Activated CD4-positive, alpha-beta memory T cell treated with anti-CD3 and anti-CD28 coated beads for 36 hours (primary cell): ENCODE measurements at regions of chr13 and their contacts with region 1.

Region 1: GRCh38 chr13:104510422-104510821 is 1444.2 kb upstream of the SLC10A2 start:
- DNase-seq: no peak
- H3K4me3 Mint-ChIP-seq: no peak overlapping the region
- H3K27ac Mint-ChIP-seq: no peak overlapping the region
- H3K4me1 Mint-ChIP-seq: no peaks in the 10 kb centered on the region
- H3K27me3 Mint-ChIP-seq: no peaks in the 10 kb centered on the region

Region 2: GRCh38 chr13:104375614-104376013 is 134.8 kb before region 1 on chr13:
- CTCF ChIA-PET with region 1: no interaction called
- POLR2A ChIA-PET with region 1: no interaction called
- intact Hi-C with region 1: no loop called
- DNase-seq: no peak
- H3K4me3 Mint-ChIP-seq: no peak overlapping the region
- H3K27ac Mint-ChIP-seq: no peak overlapping the region
- H3K4me1 Mint-ChIP-seq: no peaks in the 10 kb centered on the region
- H3K27me3 Mint-ChIP-seq: no peaks in the 10 kb centered on the region

Region 3: GRCh38 chr13:104532132-104532531 is 21.7 kb after region 1 on chr13:
- CTCF ChIA-PET with region 1: no interaction called
- POLR2A ChIA-PET with region 1: no interaction called
- intact Hi-C with region 1: no loop called
- DNase-seq: no peak
- H3K4me3 Mint-ChIP-seq: no peak overlapping the region
- H3K27ac Mint-ChIP-seq: no peak overlapping the region
- H3K4me1 Mint-ChIP-seq: no peaks in the 10 kb centered on the region
- H3K27me3 Mint-ChIP-seq: no peaks in the 10 kb centered on the region

Region 4: GRCh38 chr13:104632736-104633135 is 122.3 kb after region 1 on chr13:
- CTCF ChIA-PET with region 1: no interaction called
- POLR2A ChIA-PET with region 1: no interaction called
- intact Hi-C with region 1: loop called (anchors 10 kb)
- DNase-seq: no peak
- H3K4me3 Mint-ChIP-seq: no peak overlapping the region
- H3K27ac Mint-ChIP-seq: no peak overlapping the region
- H3K4me1 Mint-ChIP-seq: no peaks in the 10 kb centered on the region
- H3K27me3 Mint-ChIP-seq: no peaks in the 10 kb centered on the region

Region 5: DNA sequence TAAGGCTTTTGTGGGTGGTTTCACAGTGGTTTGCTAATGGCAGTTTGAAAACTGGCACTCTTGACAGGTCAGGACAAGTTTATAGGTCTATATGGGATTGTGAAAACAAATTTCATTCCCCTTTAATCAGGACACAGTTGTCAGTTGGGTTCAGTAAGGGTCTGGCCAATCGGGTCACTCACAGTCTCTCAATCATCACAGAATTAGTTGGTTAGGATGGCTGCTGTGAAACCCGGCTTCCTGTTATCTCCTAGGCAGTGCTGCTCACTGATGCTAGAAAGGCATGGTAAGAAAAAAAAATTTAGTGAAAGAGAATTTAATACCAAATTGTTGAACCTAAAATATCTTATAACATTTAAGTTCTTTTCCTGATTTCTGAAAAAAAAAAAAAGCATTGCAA is 294.9 kb after region 1 on chr13:
- CTCF ChIA-PET with region 1: no interaction called
- POLR2A ChIA-PET with region 1: no interaction called
- intact Hi-C with region 1: no loop called
- DNase-seq: no peak
- H3K4me3 Mint-ChIP-seq: no peak overlapping the region
- H3K27ac Mint-ChIP-seq: no peak overlapping the region
- H3K4me1 Mint-ChIP-seq: no peaks in the 10 kb centered on the region
- H3K27me3 Mint-ChIP-seq: no peaks in the 10 kb centered on the region